CD8-positive, alpha-beta T cell (primary cell): ENCODE measurements at regions of chr11 and their contacts with region 1.

Region 1: DNA sequence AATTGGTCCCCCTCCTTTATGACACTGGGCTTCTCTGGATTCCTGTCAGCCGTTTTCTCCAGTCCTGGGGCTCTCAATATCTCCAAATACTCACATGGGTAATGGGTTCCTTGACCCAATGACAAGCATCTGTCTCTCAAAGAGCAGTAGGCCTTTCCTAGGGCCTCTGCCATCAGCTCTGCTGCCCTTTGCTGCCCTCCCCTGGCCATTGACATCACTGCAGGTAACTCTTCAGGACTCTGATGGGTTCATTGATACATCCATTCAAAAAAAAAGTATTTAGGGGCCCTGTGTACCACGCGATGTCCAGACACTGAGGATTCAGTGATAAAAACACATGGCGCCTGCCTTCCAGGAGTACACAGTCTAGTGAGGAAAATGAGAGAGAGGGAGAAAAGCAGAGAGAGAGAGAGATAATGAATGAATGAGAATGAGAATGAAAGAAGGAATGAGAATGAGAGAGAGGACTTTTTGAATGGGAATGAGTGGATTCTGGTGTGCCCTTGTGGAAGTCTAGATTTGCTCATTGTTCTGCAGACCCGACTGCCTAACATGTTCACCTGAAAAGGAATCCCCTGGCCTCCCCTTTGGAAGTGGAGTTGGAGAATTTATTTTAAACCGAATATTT is 42.6 kb upstream of the OLFML1 start:
- DNase-seq: peak; percentile 39 to 79 (median 66)
- ATAC-seq: peak; percentile 72
- H3K4me3 ChIP-seq: no peak overlapping the region
- H3K4me3 Mint-ChIP-seq: no peak overlapping the region
- H3K27ac ChIP-seq: no peak overlapping the region
- H3K27ac Mint-ChIP-seq: no peak overlapping the region
- H3K4me1 ChIP-seq: no peaks in the 10 kb centered on the region
- H3K4me1 Mint-ChIP-seq: no peaks in the 10 kb centered on the region
- H3K27me3 ChIP-seq: no peaks in the 10 kb centered on the region
- H3K27me3 Mint-ChIP-seq: no peaks in the 10 kb centered on the region
- CTCF ChIP-seq: peak; percentile 95

Region 2: GRCh38 chr11:6746086-6746618 is 696.5 kb before region 1 on chr11:
- CTCF ChIA-PET with region 1: no interaction called
- POLR2A ChIA-PET with region 1: no interaction called
- intact Hi-C with region 1: loop called in 1 of 2 experiments (anchors 10 kb)
- DNase-seq: peak in 8 of 9 experiments; percentile 26 to 82 (median 55)
- ATAC-seq: peak; percentile 84
- H3K4me3 ChIP-seq: peak overlapping the region; percentile 61 to 65
- H3K4me3 Mint-ChIP-seq: no peak overlapping the region
- H3K27ac ChIP-seq: peak overlapping the region; percentile 69 to 89
- H3K27ac Mint-ChIP-seq: no peak overlapping the region
- H3K4me1 ChIP-seq: peaks cover 57% of the 10 kb centered on the region
- H3K4me1 Mint-ChIP-seq: peaks cover 46% of the 10 kb centered on the region
- H3K27me3 ChIP-seq: no peaks in the 10 kb centered on the region
- H3K27me3 Mint-ChIP-seq: no peaks in the 10 kb centered on the region
- CTCF ChIP-seq: no peak

Region 3: GRCh38 chr11:7098235-7098832 is 344.4 kb before region 1 on chr11:
- CTCF ChIA-PET with region 1: interaction called, 11 read pairs
- POLR2A ChIA-PET with region 1: no interaction called
- intact Hi-C with region 1: loop called in 1 of 2 experiments (anchors 1 kb)
- DNase-seq: peak in 2 of 9 experiments; percentile 53 to 69
- ATAC-seq: no peak
- H3K4me3 ChIP-seq: no peak overlapping the region
- H3K4me3 Mint-ChIP-seq: no peak overlapping the region
- H3K27ac ChIP-seq: no peak overlapping the region
- H3K27ac Mint-ChIP-seq: no peak overlapping the region
- H3K4me1 ChIP-seq: no peaks in the 10 kb centered on the region
- H3K4me1 Mint-ChIP-seq: no peaks in the 10 kb centered on the region
- H3K27me3 ChIP-seq: no peaks in the 10 kb centered on the region
- H3K27me3 Mint-ChIP-seq: peaks cover 11% of the 10 kb centered on the region
- CTCF ChIP-seq: peak; percentile 63

Region 4: GRCh38 chr11:7341551-7341950 is 101.2 kb before region 1 on chr11:
- CTCF ChIA-PET with region 1: no interaction called
- POLR2A ChIA-PET with region 1: no interaction called
- intact Hi-C with region 1: no loop called
- DNase-seq: no peak
- ATAC-seq: no peak
- H3K4me3 ChIP-seq: no peak overlapping the region
- H3K4me3 Mint-ChIP-seq: no peak overlapping the region
- H3K27ac ChIP-seq: no peak overlapping the region
- H3K27ac Mint-ChIP-seq: no peak overlapping the region
- H3K4me1 ChIP-seq: no peaks in the 10 kb centered on the region
- H3K4me1 Mint-ChIP-seq: no peaks in the 10 kb centered on the region
- H3K27me3 ChIP-seq: no peaks in the 10 kb centered on the region
- H3K27me3 Mint-ChIP-seq: peaks cover 16% of the 10 kb centered on the region
- CTCF ChIP-seq: no peak

Region 5: DNA sequence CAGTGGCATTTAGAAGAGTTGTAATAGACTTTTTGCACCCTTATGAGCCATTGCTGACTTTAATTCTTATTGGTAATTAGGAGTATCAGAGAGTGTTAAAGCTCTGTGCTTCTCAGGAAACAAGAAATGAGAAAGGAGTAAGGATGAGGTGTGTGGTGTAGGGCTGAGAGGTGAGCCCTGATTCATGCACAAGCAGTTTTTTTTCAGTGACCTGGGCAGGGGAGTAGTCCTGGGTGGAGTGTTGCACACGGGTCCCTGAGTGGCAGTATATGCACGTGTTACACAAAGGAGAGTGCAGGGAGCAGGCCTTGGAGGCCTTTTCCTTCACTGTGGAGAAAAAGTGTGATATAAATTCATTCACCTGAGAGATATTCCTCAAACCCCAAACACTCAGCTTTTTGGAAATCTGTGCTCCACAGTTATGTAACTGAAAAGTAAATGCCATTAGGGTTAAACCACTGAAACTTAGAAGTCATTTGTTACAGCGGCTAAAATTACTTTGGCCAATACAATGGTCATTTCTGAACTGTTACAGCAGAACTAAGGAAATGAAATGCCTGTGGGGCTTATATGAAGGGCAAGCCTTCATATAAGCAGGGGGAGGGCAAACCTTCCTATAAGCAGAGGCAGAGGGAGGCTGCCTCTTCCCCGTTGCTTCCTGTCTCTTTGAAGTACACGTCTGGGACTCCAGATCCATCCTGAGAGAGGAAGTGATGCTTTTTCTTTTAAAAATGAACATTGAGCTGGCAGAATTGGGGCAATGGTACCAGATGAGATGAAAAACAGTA is 20.0 kb before region 1 on chr11:
- CTCF ChIA-PET with region 1: interaction called, 10 read pairs
- POLR2A ChIA-PET with region 1: no interaction called
- intact Hi-C with region 1: no loop called
- DNase-seq: no peak
- ATAC-seq: no peak
- H3K4me3 ChIP-seq: no peak overlapping the region
- H3K4me3 Mint-ChIP-seq: no peak overlapping the region
- H3K27ac ChIP-seq: no peak overlapping the region
- H3K27ac Mint-ChIP-seq: no peak overlapping the region
- H3K4me1 ChIP-seq: peaks cover 13% of the 10 kb centered on the region
- H3K4me1 Mint-ChIP-seq: peaks cover 13% of the 10 kb centered on the region
- H3K27me3 ChIP-seq: no peaks in the 10 kb centered on the region
- H3K27me3 Mint-ChIP-seq: peaks cover 1% of the 10 kb centered on the region
- CTCF ChIP-seq: no peak

Region 6: DNA sequence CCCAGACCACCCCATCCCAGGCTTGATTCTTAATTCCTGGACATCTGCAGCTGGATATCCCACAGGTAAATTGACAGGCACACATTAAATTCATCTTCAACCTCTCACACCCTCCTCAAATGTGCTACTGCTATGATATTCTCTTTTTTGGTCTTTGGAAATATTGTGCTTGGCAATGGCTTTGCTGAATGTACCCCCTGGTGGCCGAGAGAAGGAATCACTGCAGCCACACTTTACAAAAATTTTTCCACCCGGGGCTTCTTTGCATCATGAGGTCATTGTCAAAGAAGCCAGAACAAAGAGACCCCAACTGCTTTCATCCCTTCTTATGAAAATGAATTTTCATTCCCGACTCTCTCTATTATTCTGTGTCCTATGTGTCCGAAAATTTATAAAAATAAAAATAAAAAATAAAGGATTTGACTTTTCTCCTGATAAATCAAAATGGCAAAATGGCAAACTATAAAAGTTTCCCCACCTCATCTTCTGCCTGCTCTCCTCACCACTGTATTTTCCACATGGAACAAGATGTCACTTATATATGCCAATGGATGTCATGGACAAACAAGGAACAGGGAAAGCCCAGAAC is 245.6 kb after region 1 on chr11:
- CTCF ChIA-PET with region 1: interaction called, 4 read pairs
- POLR2A ChIA-PET with region 1: no interaction called
- intact Hi-C with region 1: loop called (anchors 5 to 10 kb)
- DNase-seq: peak in 2 of 9 experiments; percentile 31 to 50
- ATAC-seq: no peak
- H3K4me3 ChIP-seq: no peak overlapping the region
- H3K4me3 Mint-ChIP-seq: no peak overlapping the region
- H3K27ac ChIP-seq: no peak overlapping the region
- H3K27ac Mint-ChIP-seq: no peak overlapping the region
- H3K4me1 ChIP-seq: no peaks in the 10 kb centered on the region
- H3K4me1 Mint-ChIP-seq: no peaks in the 10 kb centered on the region
- H3K27me3 ChIP-seq: peaks cover 2 to 5% of the 10 kb centered on the region in 2 experiments
- H3K27me3 Mint-ChIP-seq: peaks cover 26% of the 10 kb centered on the region
- CTCF ChIP-seq: peak; percentile 81